ENCODE measurements at regions of chr21 and their contacts with region 1.

Region 1: DNA sequence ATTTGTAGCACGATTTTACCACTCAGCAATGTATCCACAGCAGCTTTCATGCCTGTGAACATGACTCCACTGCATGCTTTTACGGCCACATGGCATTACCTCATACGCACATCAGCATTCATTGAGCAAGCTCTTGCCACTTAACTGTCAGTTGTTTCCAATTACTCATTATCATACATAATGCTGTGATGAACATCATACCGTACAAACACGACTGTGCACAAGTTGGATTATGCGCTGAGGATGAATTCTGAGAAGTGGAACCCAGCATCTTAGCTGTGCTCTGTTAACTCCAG is 9.6 kb downstream of the UMODL1 start:
- DNase-seq: peak; percentile 81 to 95 (median 88)
- H3K4me3 ChIP-seq: no peak overlapping the region
- H3K4me3 Mint-ChIP-seq: peak overlapping the region in 1 of 2 donors; percentile 71
- H3K27ac ChIP-seq: peak overlapping the region; percentile 69 to 86
- H3K27ac Mint-ChIP-seq: peak overlapping the region; percentile 89 to 98 (median 94)
- H3K4me1 ChIP-seq: peaks cover 27 to 32% of the 10 kb centered on the region in 2 donors
- H3K4me1 Mint-ChIP-seq: peaks cover 30% of the 10 kb centered on the region
- H3K27me3 ChIP-seq: no peaks in the 10 kb centered on the region
- H3K27me3 Mint-ChIP-seq: peaks cover 0 to 3% (median 1%) of the 10 kb centered on the region in 3 donors
- CTCF ChIP-seq: no peak

Region 2: GRCh38 chr21:42021366-42022090 is 59.2 kb before region 1 on chr21:
- intact Hi-C with region 1: no loop called
- DNase-seq: no peak
- H3K4me3 ChIP-seq: no peak overlapping the region
- H3K4me3 Mint-ChIP-seq: no peak overlapping the region
- H3K27ac ChIP-seq: no peak overlapping the region
- H3K27ac Mint-ChIP-seq: no peak overlapping the region
- H3K4me1 ChIP-seq: no peaks in the 10 kb centered on the region
- H3K4me1 Mint-ChIP-seq: no peaks in the 10 kb centered on the region
- H3K27me3 ChIP-seq: no peaks in the 10 kb centered on the region
- H3K27me3 Mint-ChIP-seq: peaks cover 0 to 5% (median 4%) of the 10 kb centered on the region in 3 donors
- CTCF ChIP-seq: no peak

Region 3: DNA sequence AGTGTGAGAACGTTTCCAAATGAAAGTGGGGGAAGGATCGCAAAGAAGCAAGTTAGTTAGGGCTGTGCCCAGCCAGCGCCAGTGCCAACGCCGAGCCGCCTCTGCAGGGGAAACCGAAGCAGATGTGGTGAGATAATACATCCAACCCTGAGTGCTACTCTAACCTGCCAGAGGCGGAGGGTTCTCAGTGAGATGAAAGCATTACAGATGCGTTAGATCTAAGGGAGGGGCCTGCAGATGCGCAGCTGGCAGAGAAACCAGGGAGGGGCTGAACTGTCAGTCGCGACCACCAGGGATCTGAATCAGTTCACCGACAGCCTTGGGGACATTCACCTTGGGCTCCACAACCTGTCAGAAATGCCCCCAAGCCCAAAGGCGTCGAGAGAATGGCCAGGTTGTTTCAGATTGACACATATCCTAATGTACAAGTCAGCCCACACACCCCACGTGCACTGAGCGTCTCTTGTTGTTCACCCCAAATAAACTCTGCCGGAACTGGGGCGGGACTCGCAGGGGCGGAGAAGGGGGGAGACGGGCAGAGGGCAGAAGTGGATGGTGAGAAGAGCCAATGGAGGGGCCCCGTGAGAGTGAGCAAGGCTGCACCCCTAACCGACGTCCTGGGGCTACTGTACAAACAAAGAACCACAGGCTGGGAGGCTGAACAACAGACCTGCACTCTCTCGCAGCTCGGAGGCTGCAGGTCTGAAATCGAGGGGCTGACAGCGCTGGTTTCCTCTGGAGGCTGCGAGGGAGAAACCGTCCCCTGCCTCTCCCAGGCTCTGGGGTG is 18.3 kb before region 1 on chr21:
- intact Hi-C with region 1: loop called in 1 of 2 experiments (anchors 1 kb)
- DNase-seq: peak; percentile 55 to 72 (median 64)
- H3K4me3 ChIP-seq: peak overlapping the region in 2 of 3 experiments; percentile 19 to 72
- H3K4me3 Mint-ChIP-seq: peak overlapping the region; percentile 61 to 85
- H3K27ac ChIP-seq: peak overlapping the region; percentile 90 to 95
- H3K27ac Mint-ChIP-seq: peak overlapping the region; percentile 93 to 97 (median 94)
- H3K4me1 ChIP-seq: peaks cover 67 to 73% of the 10 kb centered on the region in 2 donors
- H3K4me1 Mint-ChIP-seq: peaks cover 74% of the 10 kb centered on the region
- H3K27me3 ChIP-seq: no peaks in the 10 kb centered on the region
- H3K27me3 Mint-ChIP-seq: peaks cover 0 to 4% (median 2%) of the 10 kb centered on the region in 3 donors
- CTCF ChIP-seq: no peak

Region 4: GRCh38 chr21:42097860-42098454 is 17.2 kb after region 1 on chr21:
- intact Hi-C with region 1: loop called in 1 of 2 experiments (anchors 1 kb)
- DNase-seq: peak; percentile 89 to 98 (median 94)
- H3K4me3 ChIP-seq: no peak overlapping the region
- H3K4me3 Mint-ChIP-seq: no peak overlapping the region
- H3K27ac ChIP-seq: peak overlapping the region; percentile 57 to 77
- H3K27ac Mint-ChIP-seq: peak overlapping the region; percentile 87 to 99 (median 89)
- H3K4me1 ChIP-seq: peaks cover 12 to 14% of the 10 kb centered on the region in 2 donors
- H3K4me1 Mint-ChIP-seq: peaks cover 18% of the 10 kb centered on the region
- H3K27me3 ChIP-seq: no peaks in the 10 kb centered on the region
- H3K27me3 Mint-ChIP-seq: peaks cover 1 to 6% (median 3%) of the 10 kb centered on the region in 3 donors
- CTCF ChIP-seq: no peak

Measured in CD14-positive monocyte (primary cell).